BJ (cell line): ENCODE measurements at regions of chr5 and their contacts with region 1.

Region 1: DNA sequence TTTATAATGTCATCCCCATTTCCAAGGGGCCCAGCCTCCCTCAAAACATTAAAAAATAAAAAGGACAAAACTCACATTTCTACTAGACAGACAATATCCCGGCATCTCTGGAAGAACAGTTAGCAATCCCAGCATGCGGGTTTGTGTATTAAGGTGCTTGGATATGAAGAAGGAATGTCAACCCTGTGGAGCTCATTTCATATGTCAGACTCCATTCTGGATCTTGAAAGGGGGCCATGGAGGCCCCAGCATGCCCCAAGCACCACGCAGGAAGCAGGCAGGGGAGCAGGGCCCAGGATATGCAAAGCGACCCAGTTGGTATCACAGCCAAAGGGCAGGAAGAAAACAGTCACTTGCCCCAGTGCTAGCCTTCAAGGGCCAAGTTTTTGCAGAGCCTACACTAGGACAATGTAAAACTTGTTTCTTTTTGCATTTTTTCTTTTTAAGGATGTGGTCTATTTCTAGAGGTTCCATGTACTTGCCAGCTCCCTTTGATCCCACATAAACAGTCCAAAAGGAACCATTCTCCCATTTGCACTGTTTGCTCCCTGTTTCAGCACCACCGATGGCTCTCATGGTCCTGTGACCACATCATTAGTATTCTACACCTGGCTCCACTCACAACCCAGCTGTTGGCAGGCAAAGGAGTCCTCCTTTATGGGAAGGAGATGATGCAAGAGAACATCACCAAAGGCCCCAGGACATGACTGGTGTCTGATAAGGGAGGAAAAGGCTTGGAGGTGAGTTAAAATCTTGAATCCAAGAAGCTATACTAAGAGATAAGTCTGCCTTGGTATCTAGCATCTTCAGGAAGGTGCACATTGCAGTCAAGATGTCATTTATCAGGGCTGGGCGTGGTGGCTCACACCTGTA is 58.3 kb downstream of the FGF1 start:
- DNase-seq: no peak
- H3K4me3 ChIP-seq: no peak overlapping the region
- H3K27me3 ChIP-seq: no peaks in the 10 kb centered on the region
- CTCF ChIP-seq: no peak

Region 2: DNA sequence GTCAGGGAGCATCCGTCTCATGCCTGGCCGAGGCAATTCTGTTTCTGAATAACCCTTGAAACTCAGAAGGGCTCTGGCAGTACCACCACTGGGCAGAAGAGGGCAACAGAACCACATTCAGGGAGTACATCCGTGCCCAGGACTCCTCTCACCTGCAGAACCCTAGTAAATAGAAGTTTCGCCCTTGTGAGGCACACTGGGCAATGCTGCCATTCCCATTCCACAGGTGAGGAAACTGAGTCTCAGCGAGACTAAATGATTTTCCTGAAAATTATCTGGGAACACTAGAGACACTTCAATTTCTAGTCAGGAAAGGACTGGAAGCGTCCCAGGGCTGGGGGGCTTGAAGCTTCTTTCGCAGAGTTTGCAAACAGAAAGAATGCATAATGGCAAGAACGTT is 16.5 kb before region 1 on chr5:
- CTCF ChIA-PET with region 1: interaction called, 18 read pairs
- POLR2A ChIA-PET with region 1: interaction called, 3 read pairs
- DNase-seq: no peak
- H3K4me3 ChIP-seq: no peak overlapping the region
- H3K27me3 ChIP-seq: no peaks in the 10 kb centered on the region
- CTCF ChIP-seq: peak; percentile 96